ENCODE measurements at regions of chr1 and their contacts with region 1.

Region 1: GRCh38 chr1:96185181-96185580 is 536.4 kb upstream of the PTBP2 start:
- DNase-seq: no peak
- ATAC-seq: no peak
- H3K4me3 ChIP-seq: no peak overlapping the region
- H3K4me3 Mint-ChIP-seq: no peak overlapping the region
- H3K27ac ChIP-seq: no peak overlapping the region
- H3K27ac Mint-ChIP-seq: no peak overlapping the region
- H3K4me1 ChIP-seq: no peaks in the 10 kb centered on the region
- H3K4me1 Mint-ChIP-seq: no peaks in the 10 kb centered on the region
- H3K27me3 ChIP-seq: no peaks in the 10 kb centered on the region
- H3K27me3 Mint-ChIP-seq: no peaks in the 10 kb centered on the region
- CTCF ChIP-seq: no peak

Region 2: GRCh38 chr1:95888941-95889390 is 296.2 kb before region 1 on chr1:
- intact Hi-C with region 1: no loop called
- DNase-seq: no peak
- ATAC-seq: no peak
- H3K4me3 ChIP-seq: no peak overlapping the region
- H3K4me3 Mint-ChIP-seq: no peak overlapping the region
- H3K27ac ChIP-seq: no peak overlapping the region
- H3K27ac Mint-ChIP-seq: no peak overlapping the region
- H3K4me1 ChIP-seq: no peaks in the 10 kb centered on the region
- H3K4me1 Mint-ChIP-seq: no peaks in the 10 kb centered on the region
- H3K27me3 ChIP-seq: no peaks in the 10 kb centered on the region
- H3K27me3 Mint-ChIP-seq: no peaks in the 10 kb centered on the region
- CTCF ChIP-seq: no peak

Region 3: GRCh38 chr1:95916616-95917015 is 268.6 kb before region 1 on chr1:
- intact Hi-C with region 1: no loop called
- DNase-seq: no peak
- ATAC-seq: no peak
- H3K4me3 ChIP-seq: no peak overlapping the region
- H3K4me3 Mint-ChIP-seq: no peak overlapping the region
- H3K27ac ChIP-seq: no peak overlapping the region
- H3K27ac Mint-ChIP-seq: no peak overlapping the region
- H3K4me1 ChIP-seq: no peaks in the 10 kb centered on the region
- H3K4me1 Mint-ChIP-seq: no peaks in the 10 kb centered on the region
- H3K27me3 ChIP-seq: no peaks in the 10 kb centered on the region
- H3K27me3 Mint-ChIP-seq: no peaks in the 10 kb centered on the region
- CTCF ChIP-seq: no peak

Region 4: GRCh38 chr1:96164053-96164906 is 20.9 kb before region 1 on chr1:
- intact Hi-C with region 1: loop called (anchors 1 kb)
- DNase-seq: no peak
- ATAC-seq: no peak
- H3K4me3 ChIP-seq: no peak overlapping the region
- H3K4me3 Mint-ChIP-seq: no peak overlapping the region
- H3K27ac ChIP-seq: no peak overlapping the region
- H3K27ac Mint-ChIP-seq: no peak overlapping the region
- H3K4me1 ChIP-seq: no peaks in the 10 kb centered on the region
- H3K4me1 Mint-ChIP-seq: no peaks in the 10 kb centered on the region
- H3K27me3 ChIP-seq: no peaks in the 10 kb centered on the region
- H3K27me3 Mint-ChIP-seq: no peaks in the 10 kb centered on the region
- CTCF ChIP-seq: no peak

Measured in natural killer cell (primary cell).